ENCODE measurements at regions of chr2 and their contacts with region 1.

Region 1: GRCh38 chr2:74391580-74392448 is 11.7 kb upstream of the DCTN1 start:
- DNase-seq: peak; percentile 92 to 98 (median 96)
- ATAC-seq: peak; percentile 90
- H3K4me3 ChIP-seq: peak overlapping the region; percentile 72
- H3K4me3 Mint-ChIP-seq: peak overlapping the region; percentile 99
- H3K27ac ChIP-seq: peak overlapping the region; percentile 88 to 92
- H3K27ac Mint-ChIP-seq: no peak overlapping the region
- H3K4me1 ChIP-seq: peaks cover 34% of the 10 kb centered on the region
- H3K4me1 Mint-ChIP-seq: peaks cover 9% of the 10 kb centered on the region
- H3K27me3 ChIP-seq: peaks cover 0 to 5% of the 10 kb centered on the region in 2 experiments
- H3K27me3 Mint-ChIP-seq: no peaks in the 10 kb centered on the region
- CTCF ChIP-seq: peak; percentile 99

Region 2: DNA sequence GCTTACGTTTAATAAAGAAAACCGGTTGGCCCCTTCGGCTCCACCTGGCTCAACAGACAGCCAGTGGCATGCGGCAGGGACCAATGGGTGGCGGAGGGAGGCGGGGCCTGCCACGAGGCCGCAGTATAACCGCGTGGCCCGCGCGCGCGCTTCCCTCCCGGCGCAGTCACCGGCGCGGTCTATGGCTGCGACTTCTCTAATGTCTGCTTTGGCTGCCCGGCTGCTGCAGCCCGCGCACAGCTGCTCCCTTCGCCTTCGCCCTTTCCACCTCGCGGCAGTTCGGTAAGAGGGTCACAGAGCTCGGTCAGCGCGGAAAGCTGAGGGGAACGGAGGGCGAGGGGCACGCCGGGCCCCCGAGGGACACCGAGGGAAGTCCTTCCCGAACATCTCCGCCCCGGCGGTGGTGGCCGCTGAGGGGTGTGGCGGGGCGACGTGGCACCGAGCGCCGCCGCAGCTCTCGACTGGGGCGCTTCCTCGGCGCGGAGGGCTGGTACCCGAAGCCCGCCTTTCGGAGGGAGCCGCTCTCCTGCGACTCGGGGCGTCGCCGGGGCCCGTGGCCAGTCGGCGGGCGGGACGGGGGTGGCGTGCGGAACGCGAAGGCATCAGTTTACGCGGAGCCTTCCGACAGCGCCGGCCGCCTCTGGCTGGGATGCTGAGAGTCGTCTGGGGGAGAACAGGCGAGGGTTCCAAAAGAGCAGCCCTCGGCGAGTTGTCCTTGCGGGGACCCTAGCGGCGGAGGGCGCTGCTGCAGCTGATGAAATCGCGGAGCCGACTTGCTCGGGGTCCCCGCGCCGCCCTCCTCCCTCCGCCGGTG is 193.1 kb before region 1 on chr2 and contains the start of gene MTHFD2:
- CTCF ChIA-PET with region 1: interaction called, 5 read pairs
- POLR2A ChIA-PET with region 1: interaction called, 7 read pairs
- intact Hi-C with region 1: loop called in 1 of 2 experiments (anchors 2 kb)
- DNase-seq: peak; percentile 75 to 94 (median 85)
- ATAC-seq: peak; percentile 81
- H3K4me3 ChIP-seq: peak within 1 kb of the TSS; percentile 89
- H3K4me3 Mint-ChIP-seq: peak within 1 kb of the TSS; percentile 94
- H3K27ac ChIP-seq: peak within 1 kb of the TSS; percentile 86 to 88
- H3K27ac Mint-ChIP-seq: peak within 1 kb of the TSS; percentile 93
- H3K4me1 ChIP-seq: peaks cover 25% of the 10 kb centered on the region
- H3K4me1 Mint-ChIP-seq: peaks cover 31% of the 10 kb centered on the region
- H3K27me3 ChIP-seq: no peaks in the 10 kb centered on the region
- H3K27me3 Mint-ChIP-seq: no peaks in the 10 kb centered on the region
- CTCF ChIP-seq: peak; percentile 81
- total RNA-seq, gene MTHFD2: 18.6 to 21.6 TPM

Region 3: GRCh38 chr2:74414881-74415761 is 23.3 kb after region 1 on chr2:
- CTCF ChIA-PET with region 1: no interaction called
- POLR2A ChIA-PET with region 1: interaction called, 15 read pairs
- intact Hi-C with region 1: loop called in 1 of 2 experiments (anchors 2 kb)
- DNase-seq: peak in 6 of 14 experiments; percentile 17 to 48 (median 38)
- ATAC-seq: peak; percentile 30
- H3K4me3 ChIP-seq: peak overlapping the region; percentile 49
- H3K4me3 Mint-ChIP-seq: peak overlapping the region; percentile 84
- H3K27ac ChIP-seq: no peak overlapping the region
- H3K27ac Mint-ChIP-seq: peak overlapping the region; percentile 71
- H3K4me1 ChIP-seq: peaks cover 25% of the 10 kb centered on the region
- H3K4me1 Mint-ChIP-seq: peaks cover 34% of the 10 kb centered on the region
- H3K27me3 ChIP-seq: peaks cover 0 to 16% of the 10 kb centered on the region in 2 experiments
- H3K27me3 Mint-ChIP-seq: no peaks in the 10 kb centered on the region
- CTCF ChIP-seq: no peak

Region 4: GRCh38 chr2:74472086-74472944 is 80.5 kb after region 1 on chr2 and contains the start of gene MRPL53:
- CTCF ChIA-PET with region 1: interaction called, 8 read pairs
- POLR2A ChIA-PET with region 1: interaction called, 5 read pairs
- intact Hi-C with region 1: loop called in 1 of 2 experiments (anchors 5 kb)
- DNase-seq: peak; percentile 96 to 99 (median 97)
- ATAC-seq: peak; percentile 92
- H3K4me3 ChIP-seq: peak within 1 kb of the TSS; percentile 80
- H3K4me3 Mint-ChIP-seq: peak within 1 kb of the TSS; percentile 95
- H3K27ac ChIP-seq: peak within 1 kb of the TSS; percentile 85 to 91
- H3K27ac Mint-ChIP-seq: peak within 1 kb of the TSS; percentile 96
- H3K4me1 ChIP-seq: peaks cover 30% of the 10 kb centered on the region
- H3K4me1 Mint-ChIP-seq: peaks cover 25% of the 10 kb centered on the region
- H3K27me3 ChIP-seq: no peaks in the 10 kb centered on the region
- H3K27me3 Mint-ChIP-seq: no peaks in the 10 kb centered on the region
- CTCF ChIP-seq: no peak
- total RNA-seq, gene MRPL53: 39.5 to 44.3 TPM

Measured in CD4-positive, alpha-beta T cell (primary cell).